ENCODE measurements at regions of chr4 and their contacts with region 1.

Region 1: GRCh38 chr4:108141213-108141950 is 27.4 kb downstream of the LEF1 start:
- DNase-seq: peak; percentile 72
- H3K4me3 Mint-ChIP-seq: peak overlapping the region; percentile 77
- H3K27ac Mint-ChIP-seq: peak overlapping the region; percentile 99
- H3K4me1 Mint-ChIP-seq: peaks cover 89% of the 10 kb centered on the region
- H3K27me3 Mint-ChIP-seq: no peaks in the 10 kb centered on the region

Region 2: DNA sequence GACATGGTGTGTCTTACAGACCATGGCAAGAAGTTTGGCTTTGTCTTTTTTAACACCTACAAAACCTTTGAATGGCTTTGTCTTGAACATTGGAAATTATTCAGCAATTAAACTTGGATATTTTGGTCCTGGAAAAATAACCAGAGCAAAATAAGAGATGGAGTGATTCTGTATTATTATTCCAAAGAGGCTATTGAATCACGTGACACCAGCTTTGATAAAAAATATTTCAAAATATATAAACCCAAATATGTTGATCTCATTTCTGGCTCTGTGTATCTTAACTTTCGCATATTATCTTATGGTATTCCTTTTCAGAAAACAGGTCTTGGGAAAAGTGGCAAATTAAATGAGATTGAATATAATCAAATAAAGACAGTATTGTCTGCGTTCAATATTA is 1740.2 kb before region 1 on chr4:
- CTCF ChIA-PET with region 1: no interaction called
- intact Hi-C with region 1: no loop called
- DNase-seq: no peak
- H3K4me3 Mint-ChIP-seq: no peak overlapping the region
- H3K27ac Mint-ChIP-seq: no peak overlapping the region
- H3K4me1 Mint-ChIP-seq: no peaks in the 10 kb centered on the region
- H3K27me3 Mint-ChIP-seq: peaks cover 4% of the 10 kb centered on the region

Region 3: GRCh38 chr4:107654694-107655093 is 486.7 kb before region 1 on chr4:
- CTCF ChIA-PET with region 1: no interaction called
- intact Hi-C with region 1: no loop called
- DNase-seq: no peak
- H3K4me3 Mint-ChIP-seq: no peak overlapping the region
- H3K27ac Mint-ChIP-seq: no peak overlapping the region
- H3K4me1 Mint-ChIP-seq: no peaks in the 10 kb centered on the region
- H3K27me3 Mint-ChIP-seq: no peaks in the 10 kb centered on the region

Region 4: GRCh38 chr4:108100827-108101226 is 40.6 kb before region 1 on chr4:
- CTCF ChIA-PET with region 1: interaction called, 6 read pairs
- intact Hi-C with region 1: loop called (anchors 1 kb)
- DNase-seq: no peak
- H3K4me3 Mint-ChIP-seq: peak overlapping the region; percentile 7
- H3K27ac Mint-ChIP-seq: peak overlapping the region; percentile 89
- H3K4me1 Mint-ChIP-seq: peaks cover 92% of the 10 kb centered on the region
- H3K27me3 Mint-ChIP-seq: no peaks in the 10 kb centered on the region

Region 5: DNA sequence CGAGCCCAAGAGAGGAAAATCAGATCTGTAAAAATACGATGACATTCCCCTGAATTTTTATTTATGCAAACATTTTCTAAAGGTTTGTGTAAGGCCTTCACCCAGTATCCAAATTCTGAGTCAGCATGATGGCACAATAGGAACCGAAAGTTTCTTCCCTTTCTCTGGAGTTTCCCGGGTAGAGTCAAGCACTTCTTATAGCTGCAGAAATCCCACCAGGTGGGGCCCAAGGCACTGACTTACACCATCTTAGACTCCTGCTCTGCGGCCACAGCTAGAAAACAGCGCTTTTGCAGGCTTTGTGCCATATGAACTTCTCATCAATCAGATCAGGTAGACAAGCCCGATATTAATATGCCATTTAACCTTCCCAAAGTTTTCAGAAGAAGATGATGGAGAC is 14.0 kb after region 1 on chr4:
- CTCF ChIA-PET with region 1: interaction called, 10 read pairs
- intact Hi-C with region 1: loop called (anchors 2 kb)
- DNase-seq: peak; percentile 76
- H3K4me3 Mint-ChIP-seq: peak overlapping the region; percentile 75
- H3K27ac Mint-ChIP-seq: peak overlapping the region; percentile 97
- H3K4me1 Mint-ChIP-seq: peaks cover 77% of the 10 kb centered on the region
- H3K27me3 Mint-ChIP-seq: no peaks in the 10 kb centered on the region

Measured in activated naive CD4-positive, alpha-beta T cell treated with anti-CD3 and anti-CD28 coated beads for 36 hours (primary cell).